Panc1 (cell line): ENCODE measurements at regions of chr14 and their contacts with region 1.

Region 1: DNA sequence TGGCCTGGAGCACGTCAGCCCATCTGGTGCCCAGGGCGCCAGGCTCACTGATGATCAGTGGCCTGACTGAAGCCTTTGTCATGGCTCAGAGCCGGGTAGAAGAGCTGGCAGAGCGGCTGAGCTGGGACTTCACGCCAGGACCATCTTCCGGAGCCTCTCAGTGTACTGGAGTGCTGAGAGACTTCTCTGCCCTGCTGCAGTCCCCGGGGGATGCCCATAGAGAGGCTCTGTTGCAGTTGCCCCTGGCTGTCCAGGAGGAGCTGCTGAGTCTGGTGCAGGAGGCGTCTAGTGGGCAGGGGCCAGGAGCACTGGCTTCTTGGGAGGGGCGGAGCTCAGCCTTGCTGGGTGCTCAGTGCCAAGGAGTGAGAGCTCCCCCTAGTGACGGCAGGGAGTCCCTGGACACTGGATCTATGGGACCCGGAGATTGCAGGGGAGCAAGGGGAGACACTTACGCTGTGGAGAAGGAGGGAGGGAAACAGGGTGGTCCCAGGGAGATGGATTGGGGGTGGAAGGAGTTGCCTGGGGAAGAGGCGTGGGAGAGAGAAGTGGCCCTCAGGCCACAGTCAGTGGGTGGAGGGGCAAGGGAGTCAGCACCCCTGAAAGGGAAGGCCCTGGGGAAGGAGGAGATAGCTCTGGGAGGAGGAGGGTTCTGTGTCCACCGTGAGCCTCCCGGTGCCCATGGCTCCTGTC is 2.0 kb downstream of the KHNYN start:
- DNase-seq: no peak
- ATAC-seq: peak; percentile 81
- H3K4me3 ChIP-seq: peak overlapping the region; percentile 74 to 84
- H3K27ac ChIP-seq: peak overlapping the region; percentile 91
- H3K4me1 ChIP-seq: peaks cover 8% of the 10 kb centered on the region
- H3K27me3 ChIP-seq: no peaks in the 10 kb centered on the region
- CTCF ChIP-seq: peak; percentile 94

Region 2: DNA sequence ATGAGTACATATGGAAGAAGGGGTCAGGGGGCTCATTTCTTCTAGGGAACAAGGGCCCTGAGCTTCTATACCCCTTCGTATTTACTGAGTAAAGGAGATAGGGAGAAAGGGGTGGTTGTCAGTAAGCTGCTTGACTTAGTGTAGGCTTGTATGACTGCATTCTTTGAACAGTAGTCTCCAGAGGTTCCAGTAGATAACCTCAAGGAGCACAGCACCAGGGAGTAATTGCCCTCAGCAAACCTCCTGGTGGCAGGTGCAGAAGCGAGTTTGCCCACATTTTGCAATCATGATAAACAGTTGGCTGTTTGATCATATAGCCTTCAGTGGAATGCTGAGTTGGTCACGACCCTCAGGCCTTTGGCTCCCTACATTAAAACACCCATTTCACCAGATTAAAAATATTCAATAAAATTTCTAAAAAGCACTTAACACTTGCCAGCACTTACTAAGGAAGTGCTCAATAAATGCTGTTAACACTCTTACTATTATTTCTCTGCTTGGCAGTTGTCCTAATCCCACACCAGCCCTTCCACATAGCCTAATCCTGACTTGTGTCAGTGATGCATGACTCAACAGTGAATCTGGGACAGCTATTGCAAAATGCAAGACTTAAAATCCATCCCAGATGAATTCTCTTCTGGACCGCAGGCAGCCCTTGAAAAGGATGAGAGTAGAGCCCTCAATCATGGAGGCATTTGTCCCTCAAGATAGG is 446.7 kb before region 1 on chr14:
- CTCF ChIA-PET with region 1: interaction called, 10 read pairs
- POLR2A ChIA-PET with region 1: no interaction called
- in situ Hi-C with region 1: no loop called
- intact Hi-C with region 1: no loop called
- DNase-seq: no peak
- ATAC-seq: no peak
- H3K4me3 ChIP-seq: no peak overlapping the region
- H3K27ac ChIP-seq: no peak overlapping the region
- H3K4me1 ChIP-seq: no peaks in the 10 kb centered on the region
- H3K27me3 ChIP-seq: no peaks in the 10 kb centered on the region
- CTCF ChIP-seq: no peak

Region 3: DNA sequence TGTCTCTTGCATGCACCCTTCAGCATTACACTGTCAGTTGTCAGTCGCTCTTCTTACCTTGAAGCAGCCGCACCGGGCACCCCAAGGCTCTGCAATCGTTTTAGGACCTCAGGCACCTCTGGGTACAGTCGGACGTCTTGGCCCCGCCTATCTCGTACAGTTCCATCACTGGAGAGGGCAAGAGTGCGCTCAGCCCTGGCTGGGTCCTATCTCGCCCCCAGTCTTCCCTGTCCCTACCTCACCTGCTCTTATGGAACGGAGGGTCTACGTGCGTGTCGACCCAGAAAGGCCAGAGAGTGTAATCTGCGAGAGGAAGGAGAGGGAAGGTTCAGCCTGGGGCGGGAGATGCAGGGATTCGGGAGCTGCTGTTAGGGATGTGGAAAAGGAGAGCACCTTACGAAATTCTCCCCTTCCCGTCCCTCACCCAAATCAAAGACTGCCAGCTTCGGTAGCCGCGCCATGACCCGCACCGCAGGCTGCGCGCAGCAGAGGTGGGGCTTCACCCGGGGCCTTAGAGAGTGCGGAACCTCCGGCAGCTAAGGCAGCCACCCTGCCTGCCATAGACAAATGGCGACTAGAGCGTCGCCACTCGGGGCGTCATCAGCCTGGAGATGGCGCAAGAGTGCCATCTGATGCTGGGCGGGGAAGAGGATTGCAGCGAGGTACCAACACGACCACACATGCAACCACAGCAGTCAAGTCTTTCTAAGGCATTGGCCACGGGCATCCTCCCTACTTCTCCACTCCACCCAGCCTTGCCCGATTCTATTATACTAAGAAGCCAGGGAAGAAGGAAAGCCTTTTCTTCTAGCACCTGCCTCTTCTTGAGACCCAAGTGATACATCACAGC is 216.0 kb before region 1 on chr14 and contains the start of gene MDP1:
- CTCF ChIA-PET with region 1: interaction called, 13 read pairs
- POLR2A ChIA-PET with region 1: no interaction called
- in situ Hi-C with region 1: no loop called
- intact Hi-C with region 1: no loop called
- DNase-seq: no peak
- ATAC-seq: peak; percentile 86
- H3K4me3 ChIP-seq: peak within 1 kb of the TSS; percentile 74 to 77
- H3K27ac ChIP-seq: peak within 1 kb of the TSS; percentile 89
- H3K4me1 ChIP-seq: peaks cover 9% of the 10 kb centered on the region
- H3K27me3 ChIP-seq: no peaks in the 10 kb centered on the region
- CTCF ChIP-seq: peak; percentile 82
- total RNA-seq, gene MDP1: 8.9 TPM

Region 4: DNA sequence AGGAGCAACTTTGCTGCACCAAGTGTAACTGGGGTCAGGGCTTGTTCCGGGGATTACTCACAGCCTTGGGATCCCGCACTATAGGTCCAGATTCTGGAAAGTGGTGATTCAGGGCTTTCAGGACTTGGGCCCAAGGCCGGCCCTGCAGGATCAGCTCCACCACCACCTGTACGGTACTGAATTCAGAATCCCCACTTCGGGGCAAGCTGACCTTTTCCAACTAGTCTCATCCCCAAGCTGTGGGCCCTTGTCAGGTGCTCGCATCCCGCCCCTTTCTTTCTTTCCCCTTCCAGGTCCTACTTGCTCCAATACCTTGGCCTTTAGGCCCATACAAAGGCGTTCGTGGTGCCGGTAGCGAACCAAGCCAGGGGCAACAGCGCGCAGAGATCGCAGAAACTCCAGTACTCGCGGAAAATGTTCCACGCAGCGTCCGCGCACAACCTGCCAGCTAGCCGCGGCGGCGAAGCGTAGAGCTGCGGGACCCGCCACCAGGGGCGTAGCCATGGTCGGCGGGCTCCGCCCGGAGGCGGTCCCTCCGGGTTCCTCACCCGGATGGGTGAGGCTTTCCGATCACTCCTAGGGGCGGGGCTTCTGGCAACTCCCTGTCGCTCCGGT is 189.8 kb before region 1 on chr14:
- CTCF ChIA-PET with region 1: interaction called, 10 read pairs
- POLR2A ChIA-PET with region 1: no interaction called
- in situ Hi-C with region 1: no loop called
- intact Hi-C with region 1: no loop called
- DNase-seq: peak; percentile 72
- ATAC-seq: peak; percentile 93
- H3K4me3 ChIP-seq: peak overlapping the region; percentile 77 to 91
- H3K27ac ChIP-seq: peak overlapping the region; percentile 93
- H3K4me1 ChIP-seq: peaks cover 12% of the 10 kb centered on the region
- H3K27me3 ChIP-seq: no peaks in the 10 kb centered on the region
- CTCF ChIP-seq: no peak

Region 5: DNA sequence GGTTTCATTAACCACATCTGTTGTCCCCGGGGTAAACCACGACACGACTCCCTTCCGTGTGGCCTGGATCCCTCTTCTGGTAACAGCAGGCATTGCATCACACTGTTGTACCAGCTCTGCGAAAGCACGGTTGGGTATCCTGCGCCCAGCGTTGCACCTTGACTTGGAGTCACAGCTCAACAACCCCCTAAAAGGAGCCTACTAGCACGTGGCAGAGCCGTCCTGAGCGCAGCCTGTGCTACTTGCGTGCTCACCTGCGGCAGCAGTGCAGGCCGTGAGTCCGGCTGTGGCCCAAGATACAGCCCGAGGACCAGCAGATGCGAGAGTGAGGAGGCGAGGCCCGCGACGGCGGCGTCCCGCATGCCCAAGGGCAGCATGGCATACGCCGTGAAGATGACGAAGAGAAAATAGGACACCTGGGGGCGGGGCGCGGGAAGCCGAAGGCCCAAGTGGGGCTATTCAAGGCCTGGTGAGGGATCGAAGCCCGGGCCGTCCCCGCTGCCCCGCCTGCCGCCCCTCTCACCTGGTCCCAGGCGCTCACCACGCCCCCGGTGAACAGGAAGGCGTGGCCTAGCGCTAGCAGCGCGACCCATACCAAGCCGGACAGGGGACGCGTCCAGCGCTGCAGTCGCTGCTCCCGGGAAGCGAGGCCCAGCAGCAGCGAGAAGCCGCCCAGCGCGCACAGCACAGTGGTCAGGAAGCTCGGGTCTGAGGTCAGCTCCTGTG is 99.3 kb before region 1 on chr14:
- CTCF ChIA-PET with region 1: interaction called, 28 read pairs
- POLR2A ChIA-PET with region 1: no interaction called
- in situ Hi-C with region 1: loop called (anchors 10 kb)
- intact Hi-C with region 1: loop called (anchors 2 kb)
- DNase-seq: peak; percentile 48
- ATAC-seq: peak; percentile 83
- H3K4me3 ChIP-seq: no peak overlapping the region
- H3K27ac ChIP-seq: no peak overlapping the region
- H3K4me1 ChIP-seq: peaks cover 3% of the 10 kb centered on the region; the same call in 1 of the 2 replicates
- H3K27me3 ChIP-seq: no peaks in the 10 kb centered on the region
- CTCF ChIP-seq: peak; percentile 79

Region 6: GRCh38 chr14:24339284-24340151 is 92.2 kb before region 1 on chr14 and contains the start of gene RIPK3:
- CTCF ChIA-PET with region 1: interaction called, 11 read pairs
- POLR2A ChIA-PET with region 1: no interaction called
- in situ Hi-C with region 1: loop called (anchors 10 kb)
- intact Hi-C with region 1: no loop called
- DNase-seq: no peak
- ATAC-seq: no peak
- H3K4me3 ChIP-seq: no peak within 1 kb of the TSS
- H3K27ac ChIP-seq: no peak within 1 kb of the TSS
- H3K4me1 ChIP-seq: no peaks in the 10 kb centered on the region
- H3K27me3 ChIP-seq: no peaks in the 10 kb centered on the region; the same call in 1 of the 2 replicates
- CTCF ChIP-seq: no peak
- total RNA-seq, gene RIPK3: not detected

Region 7: DNA sequence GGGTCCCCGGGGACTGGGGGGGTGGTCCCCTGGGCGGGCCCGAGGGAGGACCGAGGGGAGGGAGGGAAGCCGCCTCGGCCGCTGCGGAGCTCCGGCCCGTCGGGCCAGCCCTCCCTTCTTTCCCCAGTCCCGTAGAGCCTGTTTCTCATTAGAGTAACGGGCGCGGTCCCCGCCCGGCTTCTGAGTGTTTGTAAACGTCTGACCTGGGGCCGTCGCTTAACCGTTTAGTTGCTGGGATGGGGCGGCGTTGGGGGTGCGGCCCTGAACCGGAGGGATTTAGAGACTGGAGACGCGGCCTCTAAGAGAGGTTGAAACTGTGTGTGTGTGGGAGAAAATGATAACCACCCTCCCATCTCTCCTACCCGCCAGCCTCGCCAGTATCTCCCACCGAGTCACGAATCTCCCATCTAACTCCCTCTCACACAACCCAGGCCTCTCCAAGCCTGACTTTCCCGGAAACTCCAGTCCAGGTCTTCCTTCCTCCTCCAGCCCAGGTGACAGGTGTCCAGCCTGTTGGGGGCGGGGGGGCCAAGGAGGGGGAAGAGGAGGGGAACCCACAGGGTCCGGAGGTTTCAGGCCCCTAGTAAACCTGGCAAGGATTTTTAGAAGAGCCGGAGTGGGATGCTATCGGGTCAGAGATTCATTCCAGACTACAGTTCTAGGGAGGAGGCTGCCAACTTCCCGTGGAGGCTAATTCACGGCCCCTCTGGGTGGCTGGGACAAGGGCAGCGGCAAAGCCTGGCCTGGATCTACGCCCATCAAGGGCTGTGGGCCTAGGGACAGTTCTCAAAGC is 64.8 kb before region 1 on chr14:
- CTCF ChIA-PET with region 1: interaction called, 46 read pairs
- POLR2A ChIA-PET with region 1: interaction called, 20 read pairs
- in situ Hi-C with region 1: no loop called
- intact Hi-C with region 1: loop called (anchors 1 kb)
- DNase-seq: no peak
- ATAC-seq: peak; percentile 79
- H3K4me3 ChIP-seq: peak overlapping the region; percentile 35 to 53
- H3K27ac ChIP-seq: 0 out of 2 replicates have a peak overlapping the region, but pooled peaks have one; percentile 23
- H3K4me1 ChIP-seq: peaks cover 6% of the 10 kb centered on the region
- H3K27me3 ChIP-seq: no peaks in the 10 kb centered on the region
- CTCF ChIP-seq: no peak

Region 8: DNA sequence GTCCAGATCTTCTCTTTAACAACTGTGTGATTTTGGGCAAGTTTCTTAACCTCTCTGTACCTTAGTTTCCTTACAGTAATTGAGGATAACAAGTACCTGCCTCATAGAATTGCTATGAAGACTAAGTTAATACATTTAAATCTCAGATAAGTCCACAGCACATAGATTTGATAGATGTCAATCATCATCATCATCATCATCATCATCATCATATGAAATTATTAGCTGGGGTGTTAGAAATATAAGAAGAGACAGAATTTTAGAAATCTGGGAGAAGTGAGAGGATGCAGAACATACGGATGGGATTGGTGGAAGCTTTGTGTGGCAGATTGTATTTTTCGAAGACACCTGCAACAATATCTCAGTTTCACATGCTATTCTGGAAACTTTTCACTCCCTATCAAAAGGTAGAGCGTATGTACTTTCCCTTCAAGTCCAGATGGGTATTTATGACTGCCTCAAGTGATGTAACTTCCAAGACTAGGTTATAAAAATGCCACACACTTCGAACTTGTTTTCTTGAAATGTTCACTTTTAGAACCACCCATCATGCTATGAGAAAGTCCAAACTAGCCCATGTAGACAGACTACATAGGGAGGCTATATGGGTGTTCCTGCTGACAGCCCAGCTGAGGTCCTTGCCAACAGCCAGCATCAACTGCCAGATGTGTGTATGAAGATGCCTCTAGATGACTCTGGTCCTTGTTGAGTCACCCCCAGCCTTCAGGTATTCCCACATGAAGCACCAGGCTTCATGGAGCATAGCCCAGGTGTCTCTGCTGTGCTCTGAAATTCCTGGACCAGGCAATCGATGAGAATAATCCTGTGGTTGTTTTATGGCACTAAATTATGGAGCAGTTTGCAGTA is 31.5 kb after region 1 on chr14:
- CTCF ChIA-PET with region 1: no interaction called
- POLR2A ChIA-PET with region 1: no interaction called
- in situ Hi-C with region 1: no loop called
- intact Hi-C with region 1: no loop called
- DNase-seq: no peak
- ATAC-seq: no peak
- H3K4me3 ChIP-seq: no peak overlapping the region
- H3K27ac ChIP-seq: no peak overlapping the region
- H3K4me1 ChIP-seq: no peaks in the 10 kb centered on the region
- H3K27me3 ChIP-seq: no peaks in the 10 kb centered on the region
- CTCF ChIP-seq: no peak